CD14-positive monocyte (primary cell): ENCODE measurements at regions of chr18 and their contacts with region 1.

Region 1: DNA sequence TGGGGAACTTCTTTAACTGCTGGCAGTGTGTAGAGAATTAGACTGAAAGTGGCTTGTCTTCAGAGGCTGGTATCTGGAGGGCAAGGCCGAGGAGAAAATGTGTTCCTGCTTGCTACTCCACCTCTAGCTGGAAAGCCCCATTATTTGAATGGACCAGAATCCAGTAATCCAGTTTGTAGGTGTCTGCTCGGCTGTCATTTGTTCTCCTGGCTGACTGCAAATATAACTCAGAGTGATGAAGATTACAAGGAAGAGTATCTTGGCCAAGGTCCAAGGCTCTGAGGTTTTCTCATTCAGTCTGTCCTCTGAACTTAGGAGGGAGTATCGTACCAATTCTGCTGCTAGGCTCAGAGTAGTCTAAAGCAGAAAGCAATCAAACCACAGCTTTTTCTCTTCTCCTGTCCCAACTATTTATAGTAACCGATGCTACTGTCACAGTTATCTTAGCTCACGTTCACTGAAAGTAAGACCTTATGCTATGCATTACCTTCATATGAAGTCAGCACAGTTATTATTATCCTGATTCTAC is 228.6 kb downstream of the SETBP1 start:
- DNase-seq: no peak
- H3K4me3 ChIP-seq: no peak overlapping the region
- H3K4me3 Mint-ChIP-seq: no peak overlapping the region
- H3K27ac ChIP-seq: no peak overlapping the region
- H3K27ac Mint-ChIP-seq: no peak overlapping the region
- H3K4me1 ChIP-seq: peaks cover 3 to 6% of the 10 kb centered on the region in 2 donors
- H3K4me1 Mint-ChIP-seq: peaks cover 10% of the 10 kb centered on the region
- H3K27me3 ChIP-seq: no peaks in the 10 kb centered on the region
- H3K27me3 Mint-ChIP-seq: peaks cover 2 to 10% (median 4%) of the 10 kb centered on the region in 3 donors
- CTCF ChIP-seq: no peak

Region 2: DNA sequence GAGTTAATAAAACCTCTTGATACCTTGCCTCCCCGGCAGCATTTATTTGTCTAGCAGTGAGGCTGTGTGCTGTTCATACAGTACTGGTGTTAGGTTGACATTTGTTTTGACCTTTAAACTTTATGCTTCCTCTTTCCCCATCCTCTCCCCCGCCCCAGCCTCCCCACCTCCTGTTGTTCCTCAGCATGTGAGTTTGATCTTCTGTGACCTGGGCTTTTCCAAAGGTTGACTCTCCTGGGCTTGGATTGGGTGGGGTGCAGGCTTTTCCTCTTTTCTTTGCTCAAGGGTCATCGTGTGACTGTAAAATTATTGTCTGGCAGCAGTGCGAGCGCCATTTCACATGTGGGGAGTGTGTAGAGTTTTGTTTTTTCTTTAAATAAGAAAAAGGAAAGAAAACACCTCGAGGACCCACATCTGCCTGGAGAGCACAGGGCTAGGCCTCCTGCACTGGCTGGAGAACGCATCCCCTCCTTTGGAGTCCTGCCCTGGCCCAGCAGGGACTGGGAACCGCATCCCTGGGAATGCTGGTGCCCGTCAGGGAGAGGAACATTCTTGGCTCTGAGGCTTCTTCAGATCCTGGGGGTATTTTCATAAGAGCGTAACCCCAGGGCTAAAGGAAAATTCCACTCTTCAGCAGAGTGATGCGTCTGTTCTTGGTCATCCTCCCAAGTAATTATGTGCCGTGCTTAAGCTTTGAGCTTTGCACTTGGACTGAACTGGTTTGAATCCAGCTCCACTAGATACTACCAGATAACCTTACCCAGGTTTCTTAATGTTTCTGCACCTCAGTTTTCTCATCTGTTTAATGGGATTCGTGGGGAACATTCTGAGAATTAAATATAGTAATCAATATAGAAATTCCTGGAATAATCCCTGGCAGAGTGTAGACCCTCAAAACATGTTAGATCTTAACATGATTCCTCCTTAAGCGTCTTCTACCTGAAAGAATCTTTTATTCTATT is 137.0 kb before region 1 on chr18:
- intact Hi-C with region 1: no loop called
- DNase-seq: peak in 2 of 3 donors; percentile 16 to 24
- H3K4me3 ChIP-seq: no peak overlapping the region
- H3K4me3 Mint-ChIP-seq: no peak overlapping the region
- H3K27ac ChIP-seq: no peak overlapping the region
- H3K27ac Mint-ChIP-seq: peak overlapping the region in 2 of 7 donors; percentile 26 to 50
- H3K4me1 ChIP-seq: peaks cover 11 to 16% of the 10 kb centered on the region in 2 donors
- H3K4me1 Mint-ChIP-seq: peaks cover 13% of the 10 kb centered on the region
- H3K27me3 ChIP-seq: peaks cover 7 to 17% of the 10 kb centered on the region in 2 donors
- H3K27me3 Mint-ChIP-seq: peaks cover 16 to 31% (median 18%) of the 10 kb centered on the region in 3 donors
- CTCF ChIP-seq: no peak

Region 3: GRCh38 chr18:44838971-44839666 is 70.1 kb before region 1 on chr18:
- intact Hi-C with region 1: no loop called
- DNase-seq: peak; percentile 84 to 91 (median 85)
- H3K4me3 ChIP-seq: peak overlapping the region in 1 of 3 experiments; percentile 32
- H3K4me3 Mint-ChIP-seq: peak overlapping the region in 1 of 2 donors; percentile 72
- H3K27ac ChIP-seq: peak overlapping the region in 1 of 2 donors; percentile 68
- H3K27ac Mint-ChIP-seq: peak overlapping the region in 6 of 7 donors; percentile 56 to 85 (median 71)
- H3K4me1 ChIP-seq: peaks cover 33 to 41% of the 10 kb centered on the region in 2 donors
- H3K4me1 Mint-ChIP-seq: peaks cover 50% of the 10 kb centered on the region
- H3K27me3 ChIP-seq: peaks cover 0 to 3% of the 10 kb centered on the region in 2 donors
- H3K27me3 Mint-ChIP-seq: peaks cover 7 to 14% (median 7%) of the 10 kb centered on the region in 3 donors
- CTCF ChIP-seq: no peak

Region 4: GRCh38 chr18:45202061-45202460 is 292.8 kb after region 1 on chr18:
- intact Hi-C with region 1: loop called in 1 of 2 experiments (anchors 10 kb)
- DNase-seq: no peak
- H3K4me3 ChIP-seq: no peak overlapping the region
- H3K4me3 Mint-ChIP-seq: no peak overlapping the region
- H3K27ac ChIP-seq: no peak overlapping the region
- H3K27ac Mint-ChIP-seq: no peak overlapping the region
- H3K4me1 ChIP-seq: no peaks in the 10 kb centered on the region
- H3K4me1 Mint-ChIP-seq: peaks cover under 1% of the 10 kb centered on the region
- H3K27me3 ChIP-seq: no peaks in the 10 kb centered on the region
- H3K27me3 Mint-ChIP-seq: no peaks in the 10 kb centered on the region
- CTCF ChIP-seq: no peak

Region 5: GRCh38 chr18:46070815-46071652 is 1161.8 kb after region 1 on chr18:
- intact Hi-C with region 1: no loop called
- DNase-seq: peak; percentile 57 to 77 (median 62)
- H3K4me3 ChIP-seq: peak overlapping the region; percentile 78 to 97 (median 95)
- H3K4me3 Mint-ChIP-seq: peak overlapping the region; percentile 88 to 97
- H3K27ac ChIP-seq: peak overlapping the region; percentile 75 to 78
- H3K27ac Mint-ChIP-seq: peak overlapping the region; percentile 90 to 95 (median 92)
- H3K4me1 ChIP-seq: peaks cover 35 to 48% of the 10 kb centered on the region in 2 donors
- H3K4me1 Mint-ChIP-seq: peaks cover 53% of the 10 kb centered on the region
- H3K27me3 ChIP-seq: no peaks in the 10 kb centered on the region
- H3K27me3 Mint-ChIP-seq: peaks cover 0 to 1% (median 0%) of the 10 kb centered on the region in 3 donors
- CTCF ChIP-seq: no peak